Motor neuron (in vitro differentiated cells): ENCODE measurements at regions of chr2 and their contacts with region 1.

Region 1: DNA sequence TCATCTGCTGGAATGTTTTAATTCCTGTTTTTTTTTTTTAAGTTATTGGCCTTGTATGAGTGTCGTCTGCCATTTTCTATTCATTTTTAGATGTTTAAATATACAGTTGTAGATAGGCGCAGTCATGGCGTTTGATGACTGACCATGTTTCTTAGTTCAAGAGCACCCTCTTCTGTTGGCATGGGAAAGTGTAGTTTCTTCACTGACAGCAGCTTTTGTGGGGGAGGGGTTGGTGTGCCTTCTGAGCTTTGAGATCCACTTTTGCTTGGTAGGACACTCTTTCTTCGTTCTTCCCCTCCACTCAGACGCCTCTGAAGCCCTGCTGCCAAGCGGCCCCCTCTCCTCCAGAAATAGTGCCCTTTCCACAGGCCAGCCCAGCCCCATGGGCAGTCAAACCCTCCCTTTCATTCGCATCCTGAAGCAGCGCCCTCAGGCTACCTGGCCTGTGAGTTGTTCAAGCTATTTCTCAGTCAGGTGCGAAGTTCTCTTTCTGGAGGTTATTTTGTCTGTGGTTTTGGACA is 492.0 kb downstream of the TNS1 start:
- ATAC-seq: peak; percentile 85 to 98 (median 91)
- H3K4me3 ChIP-seq: no peak overlapping the region
- H3K27ac ChIP-seq: no peak overlapping the region
- H3K4me1 ChIP-seq: peaks cover 2 to 21% of the 10 kb centered on the region in 2 donors

Region 2: GRCh38 chr2:216519154-216519762 is 991.6 kb before region 1 on chr2:
- in situ Hi-C with region 1: loop called in 2 of 9 experiments (anchors 25 kb)
- ATAC-seq: peak; percentile 61 to 92 (median 80)
- H3K4me3 ChIP-seq: no peak overlapping the region
- H3K27ac ChIP-seq: no peak overlapping the region
- H3K4me1 ChIP-seq: peaks cover 0 to 10% of the 10 kb centered on the region in 2 donors

Region 3: DNA sequence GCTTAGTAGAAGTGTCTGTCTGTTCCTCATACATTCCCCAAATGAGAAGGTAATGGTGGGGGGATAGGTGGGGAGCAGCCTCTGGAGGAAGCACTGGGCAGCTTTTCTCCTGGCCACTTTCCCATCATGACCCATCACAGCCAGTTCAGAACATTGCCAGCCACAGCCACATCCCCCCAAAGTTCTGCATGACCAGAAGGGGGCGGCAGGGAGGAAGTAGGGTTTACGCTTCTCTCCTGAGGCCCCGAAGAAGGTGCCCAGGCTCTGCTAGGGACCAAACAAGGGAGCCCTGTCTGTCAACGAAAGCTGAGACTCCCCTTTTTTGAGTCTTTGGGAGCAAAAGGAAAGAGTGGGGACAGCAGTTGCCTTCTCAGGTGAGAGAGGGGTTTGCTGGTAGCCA is 823.2 kb before region 1 on chr2:
- in situ Hi-C with region 1: loop called in 8 of 9 experiments (anchors 10 to 25 kb)
- ATAC-seq: no peak
- H3K4me3 ChIP-seq: no peak overlapping the region
- H3K27ac ChIP-seq: no peak overlapping the region
- H3K4me1 ChIP-seq: peaks cover 19 to 22% of the 10 kb centered on the region in 2 donors

Region 4: DNA sequence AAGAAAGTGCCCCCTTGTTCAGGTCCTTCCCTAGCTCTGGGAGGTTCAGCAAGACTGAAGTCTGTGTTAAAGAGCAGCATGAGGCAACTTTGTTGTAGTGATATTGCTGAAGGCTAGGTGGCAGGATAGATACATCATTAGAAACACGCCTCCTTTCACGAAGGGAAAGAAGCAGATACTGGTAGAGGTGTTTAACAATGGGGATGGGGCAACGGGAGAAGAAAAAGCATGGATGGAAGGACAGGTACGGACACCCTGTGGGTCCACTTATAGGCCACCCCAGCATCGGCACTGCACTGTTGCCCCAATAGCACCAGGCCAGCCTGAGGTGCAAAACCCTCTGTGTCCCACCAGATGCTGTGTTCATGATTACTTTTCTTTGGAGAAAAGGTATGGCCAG is 811.9 kb before region 1 on chr2:
- in situ Hi-C with region 1: loop called in 8 of 9 experiments (anchors 10 to 25 kb)
- ATAC-seq: peak; percentile 30 to 53 (median 46)
- H3K4me3 ChIP-seq: no peak overlapping the region
- H3K27ac ChIP-seq: no peak overlapping the region
- H3K4me1 ChIP-seq: peaks cover 54 to 67% of the 10 kb centered on the region in 2 donors

Region 5: DNA sequence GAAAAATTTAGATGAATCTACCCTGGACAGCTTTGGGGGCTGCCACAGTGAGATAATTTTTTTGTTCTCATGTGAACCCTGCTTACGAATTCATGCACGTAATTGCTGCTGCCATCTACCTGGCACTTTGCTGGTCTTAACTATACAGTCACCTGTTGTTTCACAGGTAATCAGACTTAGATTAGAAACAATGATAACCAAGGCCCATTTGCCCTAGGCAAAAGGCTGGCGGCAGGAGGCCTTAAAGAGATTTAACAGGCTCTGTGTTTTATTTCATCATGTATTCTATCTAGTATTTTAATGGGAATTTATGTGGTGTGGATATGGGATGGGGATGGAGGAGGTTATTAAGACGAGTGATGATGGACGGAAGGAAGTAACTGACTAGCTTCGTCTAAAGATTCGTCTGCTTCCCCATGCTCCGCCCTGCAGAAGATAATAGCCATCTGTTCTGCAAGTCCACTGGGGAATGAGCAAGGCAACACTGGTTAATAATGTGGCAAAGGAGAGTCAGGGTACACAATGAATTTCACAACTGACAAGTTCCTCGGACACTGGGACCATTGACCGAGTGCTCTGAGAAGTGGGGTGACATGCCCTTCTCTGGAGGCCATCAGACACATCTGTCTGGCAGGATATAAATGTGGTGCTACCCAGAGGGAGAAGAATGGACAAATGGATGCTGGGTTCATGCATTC is 359.2 kb before region 1 on chr2:
- in situ Hi-C with region 1: loop called in 1 of 9 experiments (anchors 10 kb)
- ATAC-seq: peak in 1 of 8 experiments; percentile 58
- H3K4me3 ChIP-seq: no peak overlapping the region
- H3K27ac ChIP-seq: no peak overlapping the region
- H3K4me1 ChIP-seq: peaks cover 0 to 13% of the 10 kb centered on the region in 2 donors